Activated naive CD8-positive, alpha-beta T cell treated with anti-CD3 and anti-CD28 coated beads, Interleukin-2, amount 10 ng/mL, durations not matched to agents 7 days and 5 days (primary cell): ENCODE measurements at regions of chr11 and their contacts with region 1.

Region 1: GRCh38 chr11:72831513-72832300 is 17.5 kb downstream of the ATG16L2 start:
- DNase-seq: peak; percentile 61
- ATAC-seq: peak; percentile 48
- H3K4me3 Mint-ChIP-seq: no peak overlapping the region
- H3K27ac Mint-ChIP-seq: peak overlapping the region; percentile 16
- H3K4me1 Mint-ChIP-seq: peaks cover 27% of the 10 kb centered on the region
- H3K27me3 Mint-ChIP-seq: no peaks in the 10 kb centered on the region

Region 2: DNA sequence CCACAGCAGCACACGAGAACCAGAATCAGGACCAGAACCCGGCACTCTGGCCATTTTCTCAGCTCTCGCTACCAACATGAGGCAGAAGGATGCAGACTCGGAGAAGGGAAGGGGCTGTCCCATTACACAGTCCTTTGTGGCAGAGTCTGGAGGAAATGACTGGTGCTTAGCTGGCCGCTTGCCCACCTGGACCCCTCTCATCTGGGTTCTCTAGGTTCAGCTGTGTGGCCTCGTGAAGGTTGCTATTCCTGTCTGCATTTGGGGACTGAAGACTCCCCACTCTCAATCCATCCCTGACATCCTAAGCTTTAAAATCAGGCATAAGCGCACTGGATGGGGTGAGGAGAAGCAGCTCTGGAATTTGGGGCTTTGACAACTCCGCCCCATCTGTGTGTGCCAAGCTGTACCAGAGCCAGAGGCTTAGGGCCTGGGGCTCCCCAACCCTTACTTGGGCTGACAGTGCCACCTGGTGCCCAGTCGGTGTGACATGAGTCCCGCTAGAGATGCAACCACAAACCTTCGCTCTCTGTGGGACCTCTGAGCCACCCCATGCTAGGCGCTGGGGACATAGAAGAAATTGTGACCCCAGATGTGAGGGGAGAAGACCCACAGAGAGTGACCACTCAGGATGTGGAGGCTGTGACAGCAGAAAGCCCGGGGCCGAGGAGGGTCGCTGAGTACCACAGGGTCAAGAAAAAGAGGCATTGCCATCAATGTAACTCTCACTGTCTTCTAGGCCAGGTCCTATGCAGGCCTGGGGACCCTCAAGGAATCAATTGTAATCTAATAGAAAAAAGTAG is 346.3 kb after region 1 on chr11:
- POLR2A ChIA-PET with region 1: interaction called, 29 read pairs
- DNase-seq: peak; percentile 82
- ATAC-seq: peak; percentile 99
- H3K4me3 Mint-ChIP-seq: no peak overlapping the region
- H3K27ac Mint-ChIP-seq: peak overlapping the region; percentile 49
- H3K4me1 Mint-ChIP-seq: peaks cover 22% of the 10 kb centered on the region
- H3K27me3 Mint-ChIP-seq: peaks cover 30% of the 10 kb centered on the region